HepG2 (cell line): ENCODE measurements at regions of chr11 and their contacts with region 1.

Region 1: DNA sequence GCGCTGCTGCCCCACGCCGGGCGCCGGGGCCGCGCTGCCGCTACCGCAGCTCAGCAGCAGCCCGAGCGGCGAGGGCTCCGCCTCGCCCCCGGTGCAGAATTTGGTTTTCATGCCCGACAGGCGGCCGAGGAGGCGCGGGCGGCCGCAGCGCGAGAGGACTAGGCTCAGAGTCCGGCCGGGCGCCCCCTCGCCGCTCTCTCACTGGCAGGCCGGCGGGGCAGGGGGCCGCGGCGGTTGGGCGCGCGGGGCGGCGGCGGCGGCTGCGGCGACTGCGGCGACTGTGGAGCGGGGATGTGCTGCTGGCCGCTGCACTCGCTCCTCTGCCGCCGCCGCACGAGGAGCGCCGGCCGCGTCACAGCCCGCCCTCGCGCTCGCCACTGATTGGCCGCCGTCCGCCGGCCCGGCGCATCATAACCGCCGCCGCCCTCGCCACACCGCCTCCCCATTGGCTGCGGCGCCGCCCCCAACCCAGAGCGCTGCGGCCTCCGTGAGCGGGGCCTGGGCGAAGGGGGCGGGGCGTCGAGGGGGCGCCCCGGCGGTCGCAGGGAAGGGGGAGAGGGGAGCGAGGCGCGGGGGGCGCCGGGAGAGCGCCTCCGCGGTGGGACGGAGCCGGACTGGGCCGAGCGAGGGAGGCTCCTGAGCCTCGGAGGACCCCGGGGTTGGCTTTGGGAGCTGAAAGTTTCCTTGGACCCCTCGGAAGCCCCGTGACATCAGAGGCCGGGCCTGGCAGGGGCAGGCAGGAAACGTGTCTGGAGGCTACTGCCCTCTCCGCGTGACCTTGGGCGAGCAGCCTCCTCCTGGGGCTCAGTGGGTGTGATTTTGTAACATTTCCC is at the start of gene CHKA:
- DNase-seq: peak; percentile 84
- ATAC-seq: peak; percentile 78
- H3K4me3 ChIP-seq: peak within 1 kb of the TSS; percentile 78 to 93 (median 91)
- H3K27ac ChIP-seq: peak within 1 kb of the TSS; percentile 98
- H3K4me1 ChIP-seq: peaks cover 68% of the 10 kb centered on the region
- H3K27me3 ChIP-seq: no peaks in the 10 kb centered on the region; a peak in 1 of 5 replicates
- CTCF ChIP-seq: peak; percentile 26; the same call in 1 of the 2 replicates
- EP300 ChIP-seq: no peak
- POLR2A ChIP-seq: no peak
- RAD21 ChIP-seq: no peak; the same call in 1 of the 2 replicates
- total RNA-seq, gene CHKA: 83.6 and 92.7 TPM in 2 replicates

Region 2: DNA sequence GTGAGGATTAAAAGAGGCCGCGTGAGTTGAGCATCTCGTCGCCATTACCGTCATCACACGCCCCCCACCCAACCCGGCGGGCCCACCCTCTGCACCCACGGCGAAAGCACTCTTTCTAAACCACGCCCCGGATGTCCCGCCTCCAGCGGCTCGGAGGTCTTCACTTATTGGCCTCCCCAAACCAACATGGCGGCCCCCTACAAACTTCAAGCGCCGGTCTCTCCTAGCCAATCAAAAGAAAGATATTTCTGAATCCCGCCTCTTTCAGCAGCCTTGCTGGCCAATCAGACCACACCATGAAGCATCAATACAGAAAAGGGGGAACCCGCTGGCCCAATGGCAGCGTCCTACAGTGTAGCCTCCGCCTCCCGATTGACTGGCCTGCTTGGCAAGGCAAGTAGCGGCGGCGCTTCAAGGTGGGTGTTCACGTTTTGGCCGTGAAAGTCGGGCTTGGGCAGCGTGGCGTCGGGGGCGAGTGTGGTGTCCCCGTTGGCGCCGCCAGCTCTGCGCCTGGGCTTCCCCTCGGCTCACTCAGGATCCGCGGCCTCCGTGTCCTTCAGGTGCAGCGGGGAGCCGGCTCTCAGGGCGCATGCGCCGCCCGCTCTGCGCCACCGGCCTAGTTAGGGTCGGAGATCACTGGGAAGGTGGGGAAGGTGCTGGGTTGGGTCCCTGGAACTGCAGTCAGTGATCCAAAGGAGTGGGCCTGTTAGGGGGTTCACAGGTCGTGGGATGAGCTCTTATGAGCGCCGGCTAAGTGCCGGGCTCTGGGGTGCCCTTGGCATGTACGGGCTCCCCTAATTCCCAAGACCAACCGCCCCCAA is 90.8 kb before region 1 on chr11 and contains the start of gene NDUFS8:
- CTCF ChIA-PET with region 1: no interaction called
- POLR2A ChIA-PET with region 1: no interaction called
- in situ Hi-C with region 1: no loop called
- intact Hi-C with region 1: no loop called
- DNase-seq: peak; percentile 99
- ATAC-seq: peak; percentile 95
- H3K4me3 ChIP-seq: peak within 1 kb of the TSS; percentile 78 to 84 (median 83)
- H3K27ac ChIP-seq: peak within 1 kb of the TSS; percentile 86
- H3K4me1 ChIP-seq: peaks cover 34% of the 10 kb centered on the region
- H3K27me3 ChIP-seq: no peaks in the 10 kb centered on the region; a peak in 1 of 5 replicates
- CTCF ChIP-seq: no peak
- EP300 ChIP-seq: no peak
- POLR2A ChIP-seq: peak in 1 of 2 experiments; percentile 72; a peak in 2 of 4 replicates
- RAD21 ChIP-seq: no peak
- total RNA-seq, gene NDUFS8: 120 and 158 TPM in 2 replicates

Region 3: DNA sequence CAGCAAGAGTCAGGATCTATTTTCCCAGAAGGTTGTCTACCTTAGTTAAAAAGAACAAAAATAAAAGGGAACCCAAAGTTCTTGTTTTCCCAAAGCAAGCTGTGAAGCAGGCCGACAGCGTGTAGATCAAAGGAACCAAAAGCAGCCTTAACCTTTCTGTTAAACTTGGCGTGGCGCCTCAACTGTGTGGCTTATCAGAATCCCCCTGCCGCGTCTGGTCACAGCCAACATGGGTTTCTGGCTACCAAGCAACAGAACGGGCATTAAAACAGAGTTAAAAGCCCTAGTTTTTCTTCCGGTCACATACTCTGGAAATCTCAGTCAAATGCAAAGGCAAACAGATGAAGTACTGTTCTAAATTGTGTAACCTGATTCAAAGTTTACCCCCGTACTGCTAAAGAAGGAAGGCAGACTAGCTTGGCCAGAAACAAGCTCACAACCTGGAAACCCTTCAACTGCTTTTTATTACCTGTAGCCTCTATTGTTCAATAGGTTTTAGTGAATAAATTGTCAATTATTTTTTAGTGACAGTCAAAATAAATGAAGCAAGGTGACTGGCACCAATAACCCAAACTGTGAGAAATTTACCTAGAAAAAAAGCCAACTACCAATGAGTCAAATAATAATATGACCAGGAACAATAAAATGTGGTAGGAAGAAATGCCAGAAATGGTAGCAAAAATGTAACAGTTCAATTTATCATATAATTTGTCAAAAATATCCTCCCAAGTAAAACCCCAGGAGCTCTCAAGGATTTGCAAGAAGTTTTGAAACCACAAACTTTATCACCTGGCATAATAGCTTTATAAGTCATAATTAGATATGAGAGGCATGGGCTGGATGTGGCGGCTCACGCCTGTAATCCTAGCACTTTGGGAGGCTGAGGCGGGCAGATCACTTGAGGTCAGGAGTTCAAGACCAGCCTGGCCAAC is 21.5 kb before region 1 on chr11:
- CTCF ChIA-PET with region 1: no interaction called
- POLR2A ChIA-PET with region 1: interaction called, 21 read pairs
- in situ Hi-C with region 1: no loop called
- intact Hi-C with region 1: loop called (anchors 1 kb)
- DNase-seq: peak; percentile 99
- ATAC-seq: peak; percentile 95
- H3K4me3 ChIP-seq: peak overlapping the region in 2 of 3 experiments; percentile 22 to 23; a peak in 2 of 6 replicates
- H3K27ac ChIP-seq: peak overlapping the region; percentile 94
- H3K4me1 ChIP-seq: peaks cover 80% of the 10 kb centered on the region
- H3K27me3 ChIP-seq: no peaks in the 10 kb centered on the region
- CTCF ChIP-seq: no peak
- EP300 ChIP-seq: peak in 1 of 2 experiments; percentile 96; a peak in 3 of 4 replicates
- POLR2A ChIP-seq: peak in 1 of 2 experiments; percentile 76; a peak in 2 of 4 replicates
- RAD21 ChIP-seq: no peak

Region 4: GRCh38 chr11:68106165-68106957 is 14.9 kb before region 1 on chr11:
- CTCF ChIA-PET with region 1: no interaction called
- POLR2A ChIA-PET with region 1: interaction called, 20 read pairs
- in situ Hi-C with region 1: no loop called
- intact Hi-C with region 1: no loop called
- DNase-seq: peak; percentile 61
- ATAC-seq: peak; percentile 67
- H3K4me3 ChIP-seq: peak overlapping the region in 1 of 3 experiments; percentile 14; a peak in 2 of 6 replicates
- H3K27ac ChIP-seq: peak overlapping the region; percentile 79
- H3K4me1 ChIP-seq: peaks cover 99% of the 10 kb centered on the region
- H3K27me3 ChIP-seq: no peaks in the 10 kb centered on the region
- CTCF ChIP-seq: 0 out of 2 replicates have a peak, but pooled peaks have one; percentile 4
- EP300 ChIP-seq: no peak; a peak in 1 of 4 replicates
- POLR2A ChIP-seq: no peak
- RAD21 ChIP-seq: no peak

Region 5: GRCh38 chr11:68235650-68236049 is 114.4 kb after region 1 on chr11:
- CTCF ChIA-PET with region 1: no interaction called
- POLR2A ChIA-PET with region 1: no interaction called
- in situ Hi-C with region 1: no loop called
- intact Hi-C with region 1: no loop called
- DNase-seq: no peak
- ATAC-seq: peak; percentile 54; the same call in 2 of the 3 replicates
- H3K4me3 ChIP-seq: peak overlapping the region in 1 of 3 experiments; percentile 37; a peak in 1 of 6 replicates
- H3K27ac ChIP-seq: no peak overlapping the region
- H3K4me1 ChIP-seq: peaks cover 14% of the 10 kb centered on the region
- H3K27me3 ChIP-seq: 0 out of 5 replicates have a peak, but pooled peaks cover 0 to 3% of the 10 kb centered on the region in 2 experiments
- CTCF ChIP-seq: no peak
- EP300 ChIP-seq: no peak
- POLR2A ChIP-seq: no peak
- RAD21 ChIP-seq: no peak